GM10248 (cell line): ENCODE measurements at regions of chr6 and their contacts with region 1.

Region 1: DNA sequence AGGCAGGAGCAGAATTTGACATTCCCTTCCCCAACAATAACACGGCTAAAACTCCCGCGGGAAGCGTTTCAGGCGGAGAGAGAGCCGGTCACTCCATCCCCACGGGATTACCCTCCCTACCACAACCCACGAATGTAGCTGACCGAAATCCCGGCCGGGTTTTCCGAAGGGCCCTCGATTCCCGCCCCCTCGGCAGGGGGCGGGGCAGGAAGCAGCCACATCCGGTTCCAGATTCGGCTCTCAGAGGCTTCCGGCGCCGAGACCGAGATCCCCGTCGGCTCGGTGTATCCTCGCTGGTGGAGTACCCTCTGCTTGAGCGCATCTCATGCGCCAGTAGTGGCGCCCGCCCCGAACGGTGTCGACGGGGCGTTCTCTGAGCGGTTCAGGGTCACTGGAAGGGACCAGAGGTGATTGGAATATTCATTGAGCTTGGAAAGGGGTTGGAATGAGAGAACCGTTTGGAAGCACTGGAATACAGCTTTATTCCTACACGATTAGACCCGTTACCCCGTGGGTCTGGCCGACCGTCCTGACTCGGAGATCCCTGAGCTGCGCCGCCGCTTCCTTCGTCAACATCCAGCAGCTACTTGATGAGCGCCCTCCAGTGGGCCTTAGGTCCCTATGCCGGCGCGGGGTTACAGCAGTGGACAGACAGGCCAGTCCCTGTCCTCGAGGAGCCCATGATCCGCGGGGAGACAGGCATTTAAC is 649 bp upstream of the RGL2 start:
- DNase-seq: peak; percentile 92
- CTCF ChIP-seq: peak; percentile 76

Region 2: GRCh38 chr6:33204378-33205190 is 94.8 kb before region 1 on chr6 and contains the start of gene HSD17B8:
- CTCF ChIA-PET with region 1: no interaction called
- POLR2A ChIA-PET with region 1: no interaction called
- DNase-seq: peak; percentile 94
- CTCF ChIP-seq: no peak

Region 3: GRCh38 chr6:33271458-33272274 is 27.7 kb before region 1 on chr6 and contains the starts of genes RPS18 and VPS52:
- CTCF ChIA-PET with region 1: interaction called, 13 read pairs
- POLR2A ChIA-PET with region 1: interaction called, 13 read pairs
- DNase-seq: peak; percentile 94
- CTCF ChIP-seq: no peak

Region 4: DNA sequence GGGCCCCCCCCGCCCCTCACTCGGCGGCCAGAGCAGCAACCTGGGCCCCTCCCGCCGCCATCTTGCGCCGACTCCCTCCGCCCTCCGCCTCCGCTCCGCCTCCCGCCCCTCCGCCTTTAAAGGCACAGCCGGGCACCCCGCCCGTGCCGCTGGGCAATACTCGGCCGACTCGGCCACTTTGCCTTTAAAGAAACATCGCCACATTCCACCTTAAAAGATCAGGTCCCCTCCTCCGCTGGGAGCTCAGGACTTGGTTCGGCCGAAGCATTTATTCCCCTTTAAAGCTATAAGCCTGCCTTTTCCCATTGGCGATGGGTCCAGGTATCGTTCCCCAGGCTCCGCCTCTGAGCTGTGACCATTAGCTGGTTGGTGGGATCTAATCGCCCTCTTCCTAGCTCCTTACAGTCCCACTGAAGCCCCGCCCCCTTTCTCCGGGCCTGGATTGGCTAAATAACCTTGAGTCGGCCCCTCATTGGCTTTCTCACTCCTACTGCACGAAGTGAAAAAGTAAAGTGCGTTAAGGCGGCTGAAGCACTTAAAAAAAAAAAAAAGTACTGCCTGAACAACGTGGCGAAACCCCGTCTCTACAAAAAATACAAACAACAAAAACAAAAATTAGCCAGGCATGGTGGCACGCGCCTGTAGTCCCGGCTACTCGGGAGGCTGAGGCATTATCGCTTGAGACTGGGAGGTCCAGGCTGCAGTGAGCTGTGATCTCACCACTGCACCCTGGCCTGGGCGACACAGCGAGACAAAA is 18.5 kb after region 1 on chr6 and contains the start of gene ZBTB22:
- CTCF ChIA-PET with region 1: interaction called, 18 read pairs
- POLR2A ChIA-PET with region 1: interaction called, 17 read pairs
- DNase-seq: peak; percentile 89
- CTCF ChIP-seq: no peak